Naive thymus-derived CD4-positive, alpha-beta T cell (primary cell): ENCODE measurements at regions of chrX and their contacts with region 1.

Region 1: DNA sequence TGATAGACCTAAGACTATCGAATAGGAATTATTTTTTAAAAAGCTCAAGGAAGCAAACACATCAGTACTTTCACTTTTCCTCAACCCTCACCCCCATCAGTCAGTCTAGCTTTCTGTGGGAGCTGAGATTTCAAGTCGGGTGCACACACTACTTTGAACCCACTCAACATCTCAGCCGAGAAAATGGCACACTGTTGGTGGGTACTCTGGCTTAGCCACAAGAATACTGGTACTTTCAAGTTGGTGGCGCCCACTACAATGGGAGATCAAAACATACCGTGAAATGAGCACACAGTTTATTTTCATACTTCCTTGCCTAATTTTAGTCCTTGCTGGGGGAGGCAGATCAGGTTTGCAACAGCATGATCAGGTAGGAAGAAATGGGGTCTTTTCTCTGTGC is 10.2 kb downstream of the CD40LG start:
- DNase-seq: peak in 4 of 9 donors; percentile 33 to 48 (median 40)
- ATAC-seq: peak; percentile 49
- H3K4me3 ChIP-seq: peak overlapping the region; percentile 18
- H3K4me3 Mint-ChIP-seq: peak overlapping the region; percentile 61 to 99 (median 94)
- H3K27ac ChIP-seq: peak overlapping the region; percentile 79
- H3K27ac Mint-ChIP-seq: peak overlapping the region; percentile 85 to 99 (median 97)
- H3K4me1 ChIP-seq: peaks cover 23 to 71% of the 10 kb centered on the region in 2 donors
- H3K4me1 Mint-ChIP-seq: peaks cover 25 to 92% (median 87%) of the 10 kb centered on the region in 7 donors
- H3K27me3 ChIP-seq: peaks cover 0 to 3% of the 10 kb centered on the region in 2 donors
- H3K27me3 Mint-ChIP-seq: no peaks in the 10 kb centered on the region

Region 2: GRCh38 chrX:136546371-136546781 is 111.8 kb before region 1 on chrX:
- CTCF ChIA-PET with region 1: no interaction called
- POLR2A ChIA-PET with region 1: no interaction called
- intact Hi-C with region 1: no loop called
- DNase-seq: peak in 4 of 9 donors; percentile 3 to 20 (median 14)
- ATAC-seq: peak; percentile 14
- H3K4me3 ChIP-seq: no peak overlapping the region
- H3K4me3 Mint-ChIP-seq: peak overlapping the region in 5 of 10 donors; percentile 14 to 65 (median 36)
- H3K27ac ChIP-seq: peak overlapping the region; percentile 39
- H3K27ac Mint-ChIP-seq: peak overlapping the region; percentile 30 to 91 (median 79)
- H3K4me1 ChIP-seq: peaks cover 11 to 33% of the 10 kb centered on the region in 2 donors
- H3K4me1 Mint-ChIP-seq: peaks cover 7 to 51% (median 43%) of the 10 kb centered on the region in 7 donors
- H3K27me3 ChIP-seq: no peaks in the 10 kb centered on the region
- H3K27me3 Mint-ChIP-seq: no peaks in the 10 kb centered on the region

Region 3: DNA sequence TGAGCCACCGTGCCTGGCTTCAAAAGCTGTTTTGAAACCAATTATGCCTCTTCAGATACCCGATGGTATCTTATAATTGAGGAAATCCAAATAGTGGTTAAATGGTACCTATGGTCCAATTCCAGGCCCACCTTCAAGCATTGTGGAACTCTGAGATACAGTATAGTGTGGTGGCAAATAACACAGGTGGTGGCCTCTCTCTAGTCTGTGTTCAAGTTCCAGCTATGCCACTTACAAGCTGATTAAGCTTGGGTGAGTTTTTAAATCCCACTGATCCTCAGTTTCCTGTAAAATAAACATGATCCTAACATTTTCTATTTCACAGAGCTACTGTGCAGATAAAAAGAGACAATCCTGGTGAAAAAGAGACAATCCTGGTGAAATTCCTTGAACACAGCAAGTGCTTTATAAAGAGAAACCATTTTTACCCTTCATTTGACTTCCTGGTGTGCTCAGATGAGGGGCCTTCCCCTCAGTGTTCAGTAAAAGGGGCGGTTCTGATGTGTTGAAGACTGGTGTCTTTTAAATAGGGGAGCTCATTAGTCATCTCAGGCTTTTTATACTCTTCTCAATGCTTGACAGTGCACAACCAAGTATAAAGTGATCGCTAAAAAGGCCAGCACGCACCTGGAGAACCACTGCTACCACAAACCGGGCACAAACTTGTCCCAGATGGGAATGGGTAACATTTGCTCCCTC is 41.0 kb before region 1 on chrX:
- CTCF ChIA-PET with region 1: interaction called, 5 read pairs
- POLR2A ChIA-PET with region 1: interaction called, 11 read pairs
- intact Hi-C with region 1: no loop called
- DNase-seq: peak in 6 of 9 donors; percentile 22 to 60 (median 34)
- ATAC-seq: peak; percentile 85
- H3K4me3 ChIP-seq: peak overlapping the region; percentile 45
- H3K4me3 Mint-ChIP-seq: peak overlapping the region; percentile 30 to 73 (median 64)
- H3K27ac ChIP-seq: peak overlapping the region; percentile 60
- H3K27ac Mint-ChIP-seq: peak overlapping the region; percentile 63 to 93 (median 87)
- H3K4me1 ChIP-seq: peaks cover 18 to 50% of the 10 kb centered on the region in 2 donors
- H3K4me1 Mint-ChIP-seq: peaks cover 5 to 75% (median 64%) of the 10 kb centered on the region in 7 donors
- H3K27me3 ChIP-seq: no peaks in the 10 kb centered on the region
- H3K27me3 Mint-ChIP-seq: no peaks in the 10 kb centered on the region

Region 4: DNA sequence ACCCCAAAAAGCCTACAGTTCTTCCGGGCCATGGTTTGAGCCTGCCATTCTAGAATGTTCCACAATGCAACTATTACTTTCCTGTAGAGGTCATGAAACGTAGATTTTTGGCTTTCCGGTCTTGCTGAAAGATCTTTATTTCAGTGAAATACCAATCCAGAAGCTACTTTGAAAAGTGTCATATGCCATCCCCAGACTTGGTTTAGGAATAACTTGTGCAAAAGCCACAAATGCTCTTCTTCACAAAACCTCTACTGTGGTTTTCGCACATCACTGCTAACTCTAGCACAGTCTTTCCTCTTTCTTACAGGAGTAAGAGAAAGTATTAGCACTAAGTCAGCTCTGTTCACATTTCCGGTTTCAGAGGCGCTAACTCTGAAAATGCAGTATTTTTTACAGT is 22.9 kb before region 1 on chrX:
- CTCF ChIA-PET with region 1: interaction called, 4 read pairs
- POLR2A ChIA-PET with region 1: interaction called, 86 read pairs
- intact Hi-C with region 1: loop called in 1 of 2 experiments (anchors 1 kb)
- DNase-seq: peak in 5 of 9 donors; percentile 49 to 68 (median 60)
- ATAC-seq: peak; percentile 80
- H3K4me3 ChIP-seq: peak overlapping the region; percentile 36
- H3K4me3 Mint-ChIP-seq: peak overlapping the region; percentile 68 to 84 (median 78)
- H3K27ac ChIP-seq: peak overlapping the region; percentile 53
- H3K27ac Mint-ChIP-seq: peak overlapping the region; percentile 80 to 94 (median 89)
- H3K4me1 ChIP-seq: peaks cover 62 to 88% of the 10 kb centered on the region in 2 donors
- H3K4me1 Mint-ChIP-seq: peaks cover 30 to 96% (median 83%) of the 10 kb centered on the region in 7 donors
- H3K27me3 ChIP-seq: no peaks in the 10 kb centered on the region
- H3K27me3 Mint-ChIP-seq: no peaks in the 10 kb centered on the region

Region 5: GRCh38 chrX:136646602-136647239 is 11.4 kb before region 1 on chrX:
- CTCF ChIA-PET with region 1: interaction called, 6 read pairs
- POLR2A ChIA-PET with region 1: interaction called, 55 read pairs
- intact Hi-C with region 1: loop called (anchors 1 kb)
- DNase-seq: peak in 7 of 9 donors; percentile 49 to 76 (median 67)
- ATAC-seq: peak; percentile 88
- H3K4me3 ChIP-seq: no peak overlapping the region
- H3K4me3 Mint-ChIP-seq: peak overlapping the region; percentile 69 to 99 (median 96)
- H3K27ac ChIP-seq: peak overlapping the region; percentile 79
- H3K27ac Mint-ChIP-seq: peak overlapping the region; percentile 92 to 99 (median 95)
- H3K4me1 ChIP-seq: peaks cover 14 to 40% of the 10 kb centered on the region in 2 donors
- H3K4me1 Mint-ChIP-seq: peaks cover 23 to 53% (median 47%) of the 10 kb centered on the region in 7 donors
- H3K27me3 ChIP-seq: no peaks in the 10 kb centered on the region
- H3K27me3 Mint-ChIP-seq: no peaks in the 10 kb centered on the region

Region 6: DNA sequence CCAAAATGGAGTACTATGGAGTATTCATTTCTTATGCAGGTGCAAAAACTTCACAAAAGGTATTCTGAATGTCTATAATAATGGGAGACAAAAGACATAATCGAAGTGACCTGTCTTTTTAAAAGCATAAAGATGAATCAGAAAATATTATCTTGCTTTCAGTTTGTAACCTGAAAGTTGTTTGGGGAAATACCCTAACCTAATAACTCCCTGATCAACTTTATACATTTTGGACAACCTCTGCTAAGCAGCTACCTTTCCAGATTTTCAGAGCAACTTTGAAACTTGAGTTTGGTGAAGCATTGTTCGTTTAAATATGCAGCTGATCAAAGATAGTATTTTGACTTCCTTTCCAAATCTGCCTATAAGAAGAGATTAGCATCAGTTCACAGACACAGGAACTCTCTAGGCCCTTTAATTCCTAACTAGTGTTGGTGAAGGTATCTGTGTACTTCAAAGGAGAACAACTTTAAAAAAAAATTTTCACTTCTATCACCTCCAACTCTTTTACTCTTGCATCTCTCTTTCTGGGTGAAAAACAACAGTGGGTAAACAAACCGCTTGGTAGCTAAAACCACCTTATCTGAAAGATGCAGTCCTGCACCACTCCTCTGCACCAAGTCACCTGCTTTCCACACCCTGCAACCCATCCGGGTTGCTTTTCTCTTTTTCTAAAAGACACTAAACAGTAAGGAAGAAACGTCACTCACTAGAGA is 16.3 kb after region 1 on chrX:
- CTCF ChIA-PET with region 1: no interaction called
- POLR2A ChIA-PET with region 1: interaction called, 27 read pairs
- intact Hi-C with region 1: loop called (anchors 1 kb)
- DNase-seq: peak in 7 of 9 donors; percentile 52 to 85 (median 72)
- ATAC-seq: peak; percentile 91
- H3K4me3 ChIP-seq: peak overlapping the region; percentile 16
- H3K4me3 Mint-ChIP-seq: peak overlapping the region; percentile 56 to 79 (median 72)
- H3K27ac ChIP-seq: peak overlapping the region; percentile 65
- H3K27ac Mint-ChIP-seq: peak overlapping the region; percentile 78 to 97 (median 93)
- H3K4me1 ChIP-seq: peaks cover 67 to 77% of the 10 kb centered on the region in 2 donors
- H3K4me1 Mint-ChIP-seq: peaks cover 36 to 98% (median 92%) of the 10 kb centered on the region in 7 donors
- H3K27me3 ChIP-seq: no peaks in the 10 kb centered on the region
- H3K27me3 Mint-ChIP-seq: no peaks in the 10 kb centered on the region

Region 7: GRCh38 chrX:136679531-136679930 is 21.4 kb after region 1 on chrX:
- CTCF ChIA-PET with region 1: no interaction called
- POLR2A ChIA-PET with region 1: interaction called, 27 read pairs
- intact Hi-C with region 1: loop called (anchors 1 kb)
- DNase-seq: no peak
- ATAC-seq: no peak
- H3K4me3 ChIP-seq: no peak overlapping the region
- H3K4me3 Mint-ChIP-seq: peak overlapping the region in 1 of 10 donors; percentile 8
- H3K27ac ChIP-seq: peak overlapping the region; percentile 29
- H3K27ac Mint-ChIP-seq: peak overlapping the region in 7 of 9 donors; percentile 14 to 97 (median 70)
- H3K4me1 ChIP-seq: peaks cover 39 to 60% of the 10 kb centered on the region in 2 donors
- H3K4me1 Mint-ChIP-seq: peaks cover 14 to 66% (median 48%) of the 10 kb centered on the region in 7 donors
- H3K27me3 ChIP-seq: no peaks in the 10 kb centered on the region
- H3K27me3 Mint-ChIP-seq: no peaks in the 10 kb centered on the region

Region 8: DNA sequence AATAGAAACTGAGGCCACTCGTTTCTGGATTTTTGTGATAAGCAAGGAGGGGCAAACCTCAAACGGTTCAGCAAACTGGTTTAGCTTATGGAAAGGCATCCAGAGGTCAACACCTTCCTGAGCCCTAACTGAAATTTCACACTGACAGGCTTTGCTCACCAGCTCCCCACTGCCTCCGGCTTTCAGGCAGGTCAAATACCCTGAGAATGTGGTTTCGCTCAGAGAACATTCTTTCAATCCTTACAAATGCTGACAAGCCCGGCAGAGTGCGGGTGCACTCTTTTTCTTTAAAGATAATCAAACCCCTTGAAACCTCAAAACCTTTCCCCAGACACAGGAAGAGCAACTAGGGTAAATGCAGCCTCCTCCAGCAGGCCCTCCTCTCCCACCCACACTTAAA is 31.3 kb after region 1 on chrX:
- CTCF ChIA-PET with region 1: interaction called, 5 read pairs
- POLR2A ChIA-PET with region 1: interaction called, 34 read pairs
- intact Hi-C with region 1: loop called (anchors 1 kb)
- DNase-seq: peak in 2 of 9 donors; percentile 17 to 31
- ATAC-seq: peak; percentile 23
- H3K4me3 ChIP-seq: no peak overlapping the region
- H3K4me3 Mint-ChIP-seq: peak overlapping the region; percentile 55 to 80 (median 64)
- H3K27ac ChIP-seq: peak overlapping the region; percentile 81
- H3K27ac Mint-ChIP-seq: peak overlapping the region; percentile 76 to 97 (median 91)
- H3K4me1 ChIP-seq: peaks cover 71 to 81% of the 10 kb centered on the region in 2 donors
- H3K4me1 Mint-ChIP-seq: peaks cover 17 to 76% (median 62%) of the 10 kb centered on the region in 7 donors
- H3K27me3 ChIP-seq: no peaks in the 10 kb centered on the region
- H3K27me3 Mint-ChIP-seq: no peaks in the 10 kb centered on the region